ENCODE measurements at regions of chr11 and their contacts with region 1.

Region 1: DNA sequence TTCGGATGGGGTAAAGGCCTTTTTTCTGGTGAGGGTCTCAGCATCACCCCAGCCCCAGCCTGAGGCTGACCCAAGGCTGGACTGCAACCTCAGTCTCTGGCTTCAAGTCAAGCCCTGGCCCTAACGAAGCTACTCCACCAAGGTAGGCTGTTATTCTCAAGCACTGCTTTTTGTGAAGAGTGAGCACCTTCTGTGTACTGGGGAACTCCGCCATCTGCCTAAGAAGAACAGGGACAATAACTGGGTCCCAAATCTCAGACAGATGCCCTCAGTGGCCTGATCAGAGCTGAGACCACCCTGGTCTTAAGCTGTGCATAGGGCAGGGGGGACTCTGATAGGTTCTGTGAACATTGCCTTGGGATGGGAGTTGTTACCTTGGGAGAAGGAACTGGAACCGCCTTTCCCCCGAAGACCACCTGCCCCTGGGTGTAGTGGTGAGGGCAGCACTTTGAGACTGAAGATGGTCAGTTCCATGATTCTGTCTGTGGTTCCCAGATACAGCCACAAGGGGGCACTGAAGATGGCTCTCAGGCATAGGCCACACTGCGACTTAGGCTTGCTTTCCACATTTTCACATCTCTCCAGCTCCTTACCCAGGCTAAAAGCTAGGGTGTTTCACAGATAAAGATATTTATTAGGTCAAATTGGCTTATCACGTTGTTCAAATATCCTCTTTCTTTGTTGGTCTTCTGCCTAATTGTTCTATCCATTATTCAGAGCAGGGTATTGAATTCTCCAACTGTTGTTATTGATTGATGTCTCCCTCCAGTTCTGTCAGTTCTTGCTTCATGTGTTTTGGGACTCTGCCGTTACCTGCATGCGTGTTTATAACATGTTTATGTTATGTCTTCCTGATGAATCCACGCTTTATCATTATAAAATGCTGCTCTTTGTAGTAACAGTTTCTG is 11.8 kb upstream of the UVRAG start:
- DNase-seq: peak; percentile 84
- H3K4me3 ChIP-seq: no peak overlapping the region
- H3K27ac ChIP-seq: no peak overlapping the region
- H3K4me1 ChIP-seq: no peaks in the 10 kb centered on the region
- H3K27me3 ChIP-seq: no peaks in the 10 kb centered on the region
- CTCF ChIP-seq: peak; percentile 87 to 90
- POLR2A ChIP-seq: no peak

Region 2: GRCh38 chr11:75525596-75526541 is 277.3 kb before region 1 on chr11 and contains the start of gene GDPD5:
- CTCF ChIA-PET with region 1: no interaction called
- POLR2A ChIA-PET with region 1: no interaction called
- dilution Hi-C with region 1: no loop called
- intact Hi-C with region 1: no loop called
- DNase-seq: peak; percentile 79
- H3K4me3 ChIP-seq: peak within 1 kb of the TSS; percentile 36 to 74 (median 68)
- H3K27ac ChIP-seq: no peak within 1 kb of the TSS
- H3K4me1 ChIP-seq: peaks cover 22% of the 10 kb centered on the region
- H3K27me3 ChIP-seq: no peaks in the 10 kb centered on the region
- CTCF ChIP-seq: peak; percentile 51 to 59
- POLR2A ChIP-seq: peak; percentile 14
- total RNA-seq, gene GDPD5: 50.1 and 79.2 TPM in 2 replicates

Region 3: DNA sequence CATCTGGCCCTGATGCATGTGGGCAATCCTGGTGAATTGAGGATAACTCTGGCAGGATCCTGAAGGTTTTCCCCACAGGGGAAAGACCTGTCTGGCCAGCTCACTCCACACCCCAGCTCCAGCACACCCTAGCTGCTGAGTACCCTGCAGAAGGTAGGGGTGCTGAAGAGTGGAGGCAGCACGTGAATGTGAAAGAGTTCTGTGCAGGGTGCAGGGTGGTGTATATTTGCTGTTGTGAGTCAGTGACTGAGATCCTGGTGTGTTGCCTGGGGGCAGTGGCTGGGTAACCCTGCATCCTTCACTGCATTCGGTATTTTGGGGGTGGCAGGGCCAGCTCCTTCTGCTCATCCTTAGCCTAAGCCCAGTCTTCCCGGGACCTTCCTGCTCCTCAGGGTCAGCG is 12.2 kb before region 1 on chr11:
- CTCF ChIA-PET with region 1: interaction called, 13 read pairs
- POLR2A ChIA-PET with region 1: no interaction called
- dilution Hi-C with region 1: no loop called
- intact Hi-C with region 1: no loop called
- DNase-seq: no peak
- H3K4me3 ChIP-seq: no peak overlapping the region
- H3K27ac ChIP-seq: no peak overlapping the region
- H3K4me1 ChIP-seq: no peaks in the 10 kb centered on the region
- H3K27me3 ChIP-seq: no peaks in the 10 kb centered on the region
- CTCF ChIP-seq: no peak
- POLR2A ChIP-seq: no peak

Region 4: DNA sequence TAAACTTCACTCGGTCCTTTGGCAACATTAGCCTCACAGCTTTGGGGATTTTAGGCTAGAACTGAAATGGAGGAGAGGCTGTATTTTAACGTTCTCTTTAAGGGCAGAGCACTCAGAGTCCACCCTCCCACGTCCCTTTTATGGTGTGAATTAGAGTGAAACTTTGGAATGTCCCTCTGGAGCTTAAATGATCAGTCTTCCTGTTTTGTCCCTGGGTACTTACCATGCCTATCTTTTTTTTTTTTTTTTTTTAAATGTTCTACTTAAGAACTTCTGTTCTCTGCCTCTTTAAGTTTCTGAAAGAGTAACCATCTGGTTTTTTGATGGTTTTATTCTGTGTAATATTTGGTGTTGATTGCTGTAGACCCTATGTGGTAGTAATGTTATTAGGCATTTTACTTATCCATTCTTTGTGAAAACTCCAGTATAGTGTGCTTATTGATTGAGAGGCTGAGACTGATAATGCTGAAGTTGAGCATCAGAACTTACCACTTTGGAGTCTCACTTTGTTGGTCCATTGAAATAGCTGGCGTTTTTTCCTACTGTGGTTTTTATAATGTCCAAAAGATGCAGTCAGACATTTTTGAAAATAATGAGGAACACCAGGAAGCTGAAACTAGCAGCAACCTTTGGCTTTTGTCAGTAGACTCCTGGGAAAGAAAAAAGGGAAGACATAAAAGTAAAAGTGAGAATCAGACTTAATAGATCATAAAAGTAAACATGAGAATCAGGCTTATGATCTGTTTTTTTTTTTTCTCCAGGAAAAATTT is 23.5 kb after region 1 on chr11:
- CTCF ChIA-PET with region 1: interaction called, 16 read pairs
- POLR2A ChIA-PET with region 1: interaction called, 3 read pairs
- dilution Hi-C with region 1: no loop called
- intact Hi-C with region 1: no loop called
- DNase-seq: peak; percentile 84
- H3K4me3 ChIP-seq: peak overlapping the region in 1 of 3 experiments; percentile 1
- H3K27ac ChIP-seq: peak overlapping the region; percentile 90
- H3K4me1 ChIP-seq: peaks cover 56% of the 10 kb centered on the region
- H3K27me3 ChIP-seq: no peaks in the 10 kb centered on the region
- CTCF ChIP-seq: no peak
- POLR2A ChIP-seq: no peak

Region 5: DNA sequence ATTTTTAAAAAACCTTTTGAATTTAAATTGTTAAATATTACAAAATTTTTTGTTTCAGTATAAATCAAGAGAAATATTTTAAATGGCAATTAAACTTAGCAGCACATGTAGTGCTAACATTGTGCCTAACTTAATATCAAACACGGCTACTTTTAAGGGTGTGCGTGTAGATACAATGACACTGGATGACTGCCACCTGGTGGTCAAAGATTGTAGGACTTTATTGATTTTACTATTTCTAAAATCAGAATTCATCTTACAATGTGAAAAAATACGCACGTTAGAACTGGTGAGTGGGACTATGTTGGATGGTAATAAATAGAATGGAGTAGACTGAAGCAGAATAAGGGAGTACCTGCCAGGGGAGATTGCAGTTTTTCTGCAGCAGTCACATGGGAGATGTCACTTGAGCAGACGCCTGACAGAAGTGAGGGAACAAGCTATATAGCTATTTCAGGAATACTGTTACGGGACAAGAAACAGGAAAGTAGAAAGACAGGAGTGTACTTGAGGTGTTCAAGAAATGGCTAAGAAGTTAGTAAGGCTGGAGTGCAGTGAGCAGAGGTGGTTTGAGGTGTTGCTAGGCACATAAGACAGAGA is 64.7 kb after region 1 on chr11:
- CTCF ChIA-PET with region 1: interaction called, 266 read pairs
- POLR2A ChIA-PET with region 1: no interaction called
- dilution Hi-C with region 1: no loop called
- intact Hi-C with region 1: loop called (anchors 1 kb)
- DNase-seq: peak; percentile 71
- H3K4me3 ChIP-seq: no peak overlapping the region
- H3K27ac ChIP-seq: no peak overlapping the region
- H3K4me1 ChIP-seq: peaks cover 20% of the 10 kb centered on the region
- H3K27me3 ChIP-seq: no peaks in the 10 kb centered on the region
- CTCF ChIP-seq: peak; percentile 47 to 58
- POLR2A ChIP-seq: no peak

Region 6: GRCh38 chr11:76096552-76096951 is 293.4 kb after region 1 on chr11:
- CTCF ChIA-PET with region 1: no interaction called
- POLR2A ChIA-PET with region 1: no interaction called
- dilution Hi-C with region 1: no loop called
- intact Hi-C with region 1: no loop called
- DNase-seq: no peak
- H3K4me3 ChIP-seq: no peak overlapping the region
- H3K27ac ChIP-seq: no peak overlapping the region
- H3K4me1 ChIP-seq: no peaks in the 10 kb centered on the region
- H3K27me3 ChIP-seq: no peaks in the 10 kb centered on the region
- CTCF ChIP-seq: no peak
- POLR2A ChIP-seq: no peak

Region 7: DNA sequence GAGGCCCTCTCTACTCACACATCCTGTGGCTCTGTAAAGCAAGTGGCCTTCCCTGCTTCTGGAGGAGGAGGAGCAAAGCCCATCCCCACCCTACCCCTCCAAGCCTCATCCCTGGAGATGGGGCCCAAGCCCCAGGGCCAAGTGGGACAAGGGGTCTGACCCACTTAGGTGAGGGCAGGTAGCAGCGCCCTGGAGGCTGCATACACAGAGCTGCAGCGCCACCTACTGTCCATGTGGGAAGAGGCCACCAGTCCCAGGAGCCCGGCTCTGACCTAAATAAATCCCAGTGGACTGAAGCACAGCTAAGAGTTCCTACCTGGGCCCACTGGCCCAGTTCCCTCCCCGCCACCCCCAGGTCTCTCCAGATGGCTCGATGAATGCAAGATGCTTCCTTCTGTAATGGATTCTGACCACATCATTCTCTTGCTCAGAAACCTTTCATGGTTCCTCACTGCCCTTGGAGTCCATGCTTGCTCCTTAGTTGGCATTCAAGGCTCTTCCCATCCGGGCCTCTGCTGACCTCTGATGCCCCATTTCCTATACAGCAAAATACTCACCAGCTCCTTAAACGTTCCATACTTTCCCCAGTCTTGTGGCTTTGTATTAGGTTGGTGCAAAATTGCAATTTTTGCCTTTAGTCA is 515.7 kb after region 1 on chr11:
- CTCF ChIA-PET with region 1: interaction called, 5 read pairs
- POLR2A ChIA-PET with region 1: no interaction called
- dilution Hi-C with region 1: no loop called
- intact Hi-C with region 1: loop called (anchors 2 kb)
- DNase-seq: peak; percentile 74
- H3K4me3 ChIP-seq: no peak overlapping the region
- H3K27ac ChIP-seq: no peak overlapping the region
- H3K4me1 ChIP-seq: no peaks in the 10 kb centered on the region
- H3K27me3 ChIP-seq: peaks cover 16 to 23% of the 10 kb centered on the region in 2 experiments
- CTCF ChIP-seq: peak; percentile 84 to 94
- POLR2A ChIP-seq: no peak

Measured in endothelial cell of umbilical vein (primary cell).